Heart left ventricle (tissue), 16 donors: ENCODE measurements at regions of chr2 and their contacts with region 1.

Region 1: GRCh38 chr2:59389240-59389639 is 1148.1 kb upstream of the FANCL start:
- DNase-seq: peak in 1 of 5 donors; percentile 27
- ATAC-seq: no peak
- H3K4me3 ChIP-seq: no peak overlapping the region
- H3K27ac ChIP-seq: no peak overlapping the region
- H3K4me1 ChIP-seq: no peaks in the 10 kb centered on the region
- H3K27me3 ChIP-seq: no peaks in the 10 kb centered on the region
- CTCF ChIP-seq: no peak
- POLR2A ChIP-seq: no peak

Region 2: GRCh38 chr2:58398406-58398805 is 990.8 kb before region 1 on chr2:
- intact Hi-C with region 1: loop called in 1 of 10 experiments (anchors 10 kb)
- DNase-seq: no peak
- ATAC-seq: no peak
- H3K4me3 ChIP-seq: no peak overlapping the region
- H3K27ac ChIP-seq: no peak overlapping the region
- H3K4me1 ChIP-seq: no peaks in the 10 kb centered on the region
- H3K27me3 ChIP-seq: no peaks in the 10 kb centered on the region
- CTCF ChIP-seq: no peak
- POLR2A ChIP-seq: no peak

Region 3: DNA sequence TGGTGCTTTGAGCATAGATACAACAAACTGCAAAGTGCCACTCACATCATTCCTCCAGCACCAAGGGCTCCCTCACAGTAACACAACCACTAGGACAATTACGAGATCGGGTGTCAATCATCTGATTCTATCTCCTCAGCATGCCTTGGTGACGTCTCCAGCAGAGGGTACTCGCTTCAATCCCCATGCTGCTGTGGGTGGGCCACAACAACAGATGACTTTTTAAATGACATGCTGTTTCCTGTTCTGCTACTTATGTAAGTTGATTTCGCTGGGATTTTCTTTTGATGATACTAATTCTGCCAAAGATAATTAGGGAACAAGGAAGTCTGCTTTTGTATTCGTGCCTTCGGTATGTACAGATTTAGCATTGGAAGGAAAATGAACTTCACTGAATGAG is 51.3 kb after region 1 on chr2:
- intact Hi-C with region 1: no loop called
- DNase-seq: no peak
- ATAC-seq: no peak
- H3K4me3 ChIP-seq: no peak overlapping the region
- H3K27ac ChIP-seq: no peak overlapping the region
- H3K4me1 ChIP-seq: no peaks in the 10 kb centered on the region
- H3K27me3 ChIP-seq: no peaks in the 10 kb centered on the region
- CTCF ChIP-seq: no peak
- POLR2A ChIP-seq: no peak

Region 4: DNA sequence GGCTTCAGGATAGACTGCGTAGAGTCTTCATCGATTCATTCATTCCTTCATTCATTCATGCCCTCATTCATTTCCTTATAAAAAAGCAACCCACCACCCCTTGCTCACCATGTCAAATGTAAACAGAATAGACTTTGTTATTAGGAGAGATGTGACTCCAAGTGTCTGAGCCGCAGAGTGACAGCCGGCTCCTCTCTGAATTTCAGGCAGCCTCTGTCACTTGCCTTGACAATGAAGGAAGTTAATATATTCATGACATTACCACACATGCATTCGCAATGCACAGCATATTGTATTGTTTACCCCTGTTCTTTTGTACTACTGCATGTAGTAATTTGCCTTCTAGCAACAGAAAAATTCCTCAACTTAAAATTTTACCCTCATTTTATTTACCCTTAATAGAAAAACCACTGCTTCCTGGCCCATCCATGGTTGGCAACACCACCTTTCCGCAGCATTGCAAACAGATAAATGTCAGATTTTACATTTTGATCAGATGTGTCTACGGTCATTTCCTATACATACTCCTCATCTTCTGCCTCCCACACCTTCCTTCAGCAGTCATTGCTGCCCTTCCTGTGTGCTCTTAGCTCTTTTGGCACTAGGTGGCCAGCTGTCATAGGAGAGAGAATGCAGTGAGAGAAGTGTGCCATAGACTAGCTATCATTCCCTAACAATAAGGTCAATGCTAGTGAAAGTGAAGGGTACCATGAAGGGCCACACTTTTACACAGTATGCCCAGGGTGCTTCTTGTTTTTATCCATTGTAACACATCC is 73.4 kb after region 1 on chr2:
- intact Hi-C with region 1: no loop called
- DNase-seq: no peak
- ATAC-seq: peak in 1 of 4 donors; percentile 57
- H3K4me3 ChIP-seq: no peak overlapping the region
- H3K27ac ChIP-seq: no peak overlapping the region
- H3K4me1 ChIP-seq: no peaks in the 10 kb centered on the region
- H3K27me3 ChIP-seq: no peaks in the 10 kb centered on the region
- CTCF ChIP-seq: peak in 1 of 12 donors; percentile 33
- POLR2A ChIP-seq: no peak

Region 5: DNA sequence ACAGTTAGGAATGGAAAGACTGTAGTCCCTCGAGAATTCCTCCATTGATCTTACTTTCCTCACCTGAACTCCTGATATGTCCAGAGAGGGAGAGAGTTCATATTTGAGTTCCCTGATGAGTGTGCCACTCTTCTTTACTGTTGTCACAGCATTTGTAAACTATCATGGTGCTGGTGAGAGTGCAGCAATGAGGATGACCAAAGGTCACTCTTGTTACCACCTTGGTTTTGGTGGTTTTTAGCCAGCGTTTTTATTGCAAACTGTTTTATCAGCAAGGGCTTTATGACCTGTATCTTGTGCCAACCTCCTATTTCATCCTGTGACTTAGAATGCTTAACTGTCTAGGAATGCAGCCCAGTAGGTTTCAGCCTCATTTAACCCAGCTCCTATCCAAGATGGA is 101.8 kb after region 1 on chr2:
- intact Hi-C with region 1: no loop called
- DNase-seq: no peak
- ATAC-seq: no peak
- H3K4me3 ChIP-seq: no peak overlapping the region
- H3K27ac ChIP-seq: no peak overlapping the region
- H3K4me1 ChIP-seq: no peaks in the 10 kb centered on the region
- H3K27me3 ChIP-seq: no peaks in the 10 kb centered on the region
- CTCF ChIP-seq: no peak
- POLR2A ChIP-seq: no peak